GM13977 (cell line): ENCODE measurements at regions of chr19 and their contacts with region 1.

Region 1: GRCh38 chr19:51660975-51661600 is 14.5 kb upstream of the SIGLEC14 start:
- DNase-seq: peak; percentile 46
- CTCF ChIP-seq: peak; percentile 77

Region 2: GRCh38 chr19:51158474-51159129 is 502.5 kb before region 1 on chr19:
- in situ Hi-C with region 1: loop called (anchors 25 kb)
- DNase-seq: peak; percentile 51
- CTCF ChIP-seq: peak; percentile 93

Region 3: DNA sequence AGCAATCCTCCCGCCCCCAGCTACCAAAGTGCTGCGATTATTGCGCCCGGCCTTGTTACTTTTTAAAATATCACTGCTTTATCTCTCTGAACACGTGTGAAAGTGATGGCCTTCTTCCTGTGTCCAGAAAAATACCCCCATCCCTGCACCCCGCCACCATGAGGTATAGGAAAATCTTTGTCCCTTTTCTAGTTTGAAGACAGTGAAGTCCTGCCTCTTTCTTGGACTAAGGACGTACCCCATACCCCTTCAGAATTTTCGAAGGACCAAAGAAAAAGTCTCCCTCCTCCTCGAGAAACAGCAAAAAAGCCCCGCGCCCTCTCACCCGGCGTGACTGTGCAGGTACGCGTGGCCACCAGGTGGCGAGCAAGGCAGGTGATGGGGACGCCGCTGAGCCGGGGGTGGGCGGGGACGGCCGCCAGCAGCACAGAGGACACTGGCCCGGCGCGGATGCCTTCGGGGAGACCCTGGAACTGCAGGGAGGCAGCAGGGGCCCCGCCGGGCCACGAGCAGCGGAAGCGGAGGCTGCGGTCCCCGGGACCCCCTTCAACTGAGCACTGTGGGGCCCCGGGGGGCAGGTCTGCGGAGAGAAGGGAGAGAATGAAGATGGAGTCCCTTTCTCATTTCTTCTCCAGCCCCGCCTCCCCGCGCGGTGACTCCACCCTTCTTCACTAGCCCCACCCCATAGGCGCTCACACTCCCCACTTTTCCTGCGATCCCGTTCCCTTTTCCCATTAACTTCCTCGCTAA is 322.4 kb before region 1 on chr19:
- in situ Hi-C with region 1: loop called (anchors 25 kb)
- DNase-seq: peak; percentile 94
- CTCF ChIP-seq: peak; percentile 92

Region 4: GRCh38 chr19:51501594-51502263 is 159.4 kb before region 1 on chr19 and contains the start of gene SIGLEC12:
- in situ Hi-C with region 1: no loop called
- DNase-seq: no peak
- CTCF ChIP-seq: no peak

Region 5: DNA sequence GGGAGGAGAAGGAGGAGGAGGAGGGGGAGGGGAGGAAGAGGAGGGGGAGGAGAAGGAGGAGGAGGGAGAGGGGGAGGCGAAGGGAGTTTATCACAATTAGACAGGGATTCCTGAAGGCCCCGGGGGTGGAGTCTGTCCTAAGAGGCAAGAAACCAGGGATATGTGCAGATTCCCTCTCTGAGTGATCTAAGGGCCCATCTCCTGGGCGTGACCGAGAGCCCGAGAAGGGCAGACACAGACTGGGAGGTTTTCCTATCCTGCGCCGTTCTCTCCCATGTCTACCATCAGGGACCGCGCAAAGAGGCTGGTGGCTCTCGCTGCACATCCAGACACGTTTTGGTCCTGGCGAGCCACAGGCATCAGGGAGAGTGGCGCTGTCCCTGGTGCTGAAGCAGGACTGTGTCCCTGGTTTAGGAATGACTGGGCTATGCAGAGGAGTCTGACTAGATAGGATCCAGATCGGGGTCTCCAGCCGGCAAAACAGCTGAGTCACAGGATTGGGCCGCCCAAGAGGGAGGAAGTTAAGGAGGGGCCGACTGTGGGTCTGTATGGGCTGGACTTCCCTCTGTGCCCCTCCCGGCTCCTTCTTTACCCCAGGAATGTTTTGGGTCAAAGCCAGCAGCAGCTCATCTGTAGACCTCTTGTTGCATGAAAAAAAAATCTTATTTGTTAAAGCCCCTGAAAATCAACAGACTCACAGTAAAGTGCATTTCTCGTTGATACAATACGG is 107.9 kb before region 1 on chr19:
- in situ Hi-C with region 1: no loop called
- DNase-seq: peak; percentile 34
- CTCF ChIP-seq: no peak

Region 6: DNA sequence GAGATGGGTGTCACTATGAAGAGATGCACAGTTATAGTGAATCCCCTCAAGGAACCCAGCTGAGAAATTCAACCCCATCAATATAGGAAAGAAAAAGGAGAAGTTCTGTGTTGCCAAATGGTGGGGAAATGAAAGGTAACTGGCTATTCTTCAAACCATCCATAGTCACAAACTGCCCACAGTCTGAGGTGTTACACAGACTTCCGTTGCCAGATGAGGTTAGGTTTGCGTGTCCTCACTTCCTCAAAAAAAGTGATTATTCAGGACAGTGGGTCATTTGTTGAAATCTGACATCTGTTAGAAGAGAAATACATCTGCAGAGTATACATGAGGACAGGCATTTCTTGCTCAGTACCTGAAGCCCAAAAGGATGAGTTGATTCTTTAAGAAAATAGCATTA is 39.9 kb before region 1 on chr19:
- in situ Hi-C with region 1: no loop called
- DNase-seq: peak; percentile 70
- CTCF ChIP-seq: no peak